Right ventricle myocardium superior (tissue), 1 donor: ENCODE measurements at regions of chr18 and their contacts with region 1.

Region 1: GRCh38 chr18:7000484-7001096 is 117.0 kb downstream of the LAMA1 start:
- DNase-seq: no peak
- ATAC-seq: no peak

Region 2: DNA sequence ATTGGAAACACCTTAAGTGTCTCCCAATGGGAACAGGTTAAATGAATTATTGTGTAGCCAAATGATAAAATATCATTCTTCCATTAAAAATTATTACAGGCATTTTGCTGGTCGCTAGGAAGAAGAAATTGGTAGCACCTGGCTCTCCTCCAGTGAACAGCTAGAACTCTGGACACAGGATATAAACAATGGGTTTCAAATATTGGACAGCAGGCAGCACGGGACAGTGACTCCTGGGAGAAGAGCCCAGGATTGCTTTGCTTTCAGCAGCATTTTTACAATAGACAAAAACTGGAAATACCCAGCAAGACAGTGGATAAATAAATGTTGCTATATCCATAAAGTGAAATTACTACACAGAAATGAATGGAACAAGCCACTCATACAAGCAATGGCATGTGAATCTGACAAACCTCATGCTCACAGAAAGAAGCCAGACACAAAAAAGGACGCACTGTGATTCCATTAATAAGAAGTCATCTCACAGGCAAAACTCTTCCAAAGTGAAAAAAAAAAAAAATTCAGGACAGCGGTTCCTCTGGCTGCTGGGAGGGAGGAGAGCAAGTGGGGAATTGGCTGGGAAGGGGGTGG is 66.5 kb after region 1 on chr18:
- intact Hi-C with region 1: loop called (anchors 10 kb)
- DNase-seq: no peak
- ATAC-seq: no peak

Region 3: GRCh38 chr18:7317804-7318231 is 317.2 kb after region 1 on chr18:
- intact Hi-C with region 1: no loop called
- DNase-seq: no peak
- ATAC-seq: no peak